ENCODE measurements at regions of chr14 and their contacts with region 1.

Region 1: GRCh38 chr14:81269979-81270375 is 49.2 kb upstream of the GTF2A1 start:
- DNase-seq: no peak
- H3K4me3 ChIP-seq: no peak overlapping the region
- H3K27ac ChIP-seq: peak overlapping the region in 7 of 8 donors; percentile 7 to 77 (median 58)
- H3K4me1 ChIP-seq: peaks cover 5 to 44% (median 28%) of the 10 kb centered on the region in 6 donors
- H3K27me3 ChIP-seq: no peaks in the 10 kb centered on the region
- CTCF ChIP-seq: no peak
- POLR2A ChIP-seq: no peak

Region 2: DNA sequence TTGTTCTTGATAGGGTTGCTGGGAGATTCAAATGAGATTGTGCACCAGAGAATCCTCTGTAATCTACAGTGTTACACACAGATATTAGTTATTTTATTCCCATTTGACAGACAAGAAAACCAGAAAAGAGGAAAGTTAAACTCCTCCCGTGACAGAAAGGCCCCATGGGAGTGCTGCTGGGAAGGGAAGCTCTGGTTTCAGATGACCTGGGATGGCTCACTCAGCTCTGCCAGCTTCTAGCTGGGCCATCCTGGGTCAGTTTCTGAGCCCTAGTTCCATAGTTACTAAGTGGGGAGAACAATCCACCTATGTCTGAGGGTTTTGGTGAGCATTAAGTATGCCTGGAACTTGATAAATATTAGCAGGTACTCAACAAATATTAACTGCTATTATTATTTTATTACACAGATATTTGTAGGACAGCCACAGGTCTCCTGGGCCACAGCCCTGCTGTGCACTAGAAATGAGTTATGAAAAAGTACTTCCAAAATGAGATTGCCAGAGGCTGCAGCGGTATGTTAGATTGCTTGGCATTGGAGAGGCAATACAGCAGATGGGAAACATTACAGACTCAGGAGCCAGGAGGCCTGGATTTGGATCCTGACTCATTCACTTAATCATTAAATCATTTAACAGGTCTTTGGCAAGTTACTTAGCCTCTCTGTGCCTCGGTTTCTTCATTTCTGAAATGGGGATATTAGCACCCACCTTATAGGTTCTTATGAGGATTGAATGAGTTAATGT is 177.2 kb after region 1 on chr14:
- intact Hi-C with region 1: no loop called
- DNase-seq: no peak
- H3K4me3 ChIP-seq: no peak overlapping the region
- H3K27ac ChIP-seq: no peak overlapping the region
- H3K4me1 ChIP-seq: peaks cover 0 to 22% (median 10%) of the 10 kb centered on the region in 6 donors
- H3K27me3 ChIP-seq: peaks cover 0 to 28% (median 0%) of the 10 kb centered on the region in 7 donors
- CTCF ChIP-seq: no peak
- POLR2A ChIP-seq: no peak

Region 3: GRCh38 chr14:81458352-81458751 is 188.4 kb after region 1 on chr14:
- intact Hi-C with region 1: loop called (anchors 2 kb)
- DNase-seq: no peak
- H3K4me3 ChIP-seq: no peak overlapping the region
- H3K27ac ChIP-seq: no peak overlapping the region
- H3K4me1 ChIP-seq: peaks cover 0 to 11% (median 3%) of the 10 kb centered on the region in 6 donors
- H3K27me3 ChIP-seq: no peaks in the 10 kb centered on the region
- CTCF ChIP-seq: no peak
- POLR2A ChIP-seq: no peak

Measured in spleen (tissue), 13 donors.